Astrocyte of the cerebellum (primary cell): ENCODE measurements at regions of chr9 and their contacts with region 1.

Region 1: DNA sequence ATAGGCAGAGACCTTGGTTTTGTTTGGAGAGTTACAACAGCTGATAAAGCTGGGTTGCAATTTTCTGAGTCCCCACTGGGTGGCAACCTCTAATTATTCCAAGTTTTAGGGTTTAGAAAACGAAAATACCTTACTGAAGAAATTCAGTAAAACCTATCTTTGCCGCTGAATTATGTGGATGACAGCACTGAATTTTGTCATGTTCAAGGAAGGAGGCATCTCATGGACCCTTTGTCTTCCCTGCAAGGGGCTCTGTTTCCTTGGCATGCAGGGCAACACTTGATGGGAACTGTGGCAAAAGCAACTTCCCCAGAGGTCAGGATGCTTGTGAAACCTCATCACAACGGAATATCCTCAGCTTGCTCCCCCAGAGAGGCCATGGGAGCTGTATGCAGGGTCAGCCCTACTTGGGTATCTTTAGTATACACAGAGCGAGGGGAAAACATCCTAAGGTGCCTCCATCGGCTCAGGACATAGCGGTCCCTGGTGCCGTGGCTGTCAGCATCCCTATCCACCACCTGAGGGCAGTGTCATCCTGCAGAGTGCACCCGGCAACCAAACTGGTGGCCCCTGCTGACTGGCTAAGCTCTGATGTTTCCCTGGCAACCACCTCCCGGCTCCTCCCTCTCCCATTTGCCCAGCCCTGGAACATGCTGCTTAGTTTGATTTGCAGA is 123.1 kb downstream of the RXRA start:
- DNase-seq: peak; percentile 95
- H3K4me3 ChIP-seq: no peak overlapping the region
- CTCF ChIP-seq: peak; percentile 90

Region 2: DNA sequence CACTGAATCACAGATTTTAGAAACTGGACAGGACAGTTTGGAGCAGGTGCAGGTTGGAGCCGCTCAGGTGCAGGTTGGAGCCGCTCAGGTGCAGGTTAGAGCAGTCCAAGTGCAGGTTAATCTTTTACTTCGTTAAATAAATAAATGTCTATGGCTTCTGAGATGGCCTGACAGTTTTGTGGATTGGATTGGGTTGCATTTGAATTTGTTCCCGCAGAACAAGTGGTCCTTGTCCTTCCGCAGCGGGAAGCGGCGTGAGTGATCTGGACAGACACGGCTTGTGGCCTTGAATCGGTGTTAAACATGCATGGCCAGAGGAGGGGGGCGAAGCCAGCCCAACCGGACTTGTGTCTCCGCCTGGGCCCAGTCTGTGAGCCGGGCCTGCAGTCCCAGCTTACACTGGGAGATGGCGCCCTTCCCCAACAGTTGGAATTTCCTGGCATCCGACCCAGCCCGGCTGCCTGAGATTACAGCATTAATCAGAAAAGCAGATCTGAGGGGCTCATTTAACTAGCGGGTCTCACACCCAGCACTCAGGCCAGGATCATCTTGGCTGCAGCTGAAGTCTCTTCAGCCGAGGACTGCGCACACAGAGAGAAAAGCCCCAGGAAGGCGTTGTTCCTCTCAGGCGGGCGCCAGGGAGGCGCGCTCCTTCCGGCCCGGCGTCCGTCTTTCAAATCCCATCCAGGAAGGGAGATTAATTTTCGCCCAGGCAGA is 636.6 kb after region 1 on chr9:
- in situ Hi-C with region 1: loop called (anchors 25 kb)
- DNase-seq: peak; percentile 11
- H3K4me3 ChIP-seq: no peak overlapping the region
- CTCF ChIP-seq: peak; percentile 77